ENCODE measurements at regions of chr16 and their contacts with region 1.

Region 1: DNA sequence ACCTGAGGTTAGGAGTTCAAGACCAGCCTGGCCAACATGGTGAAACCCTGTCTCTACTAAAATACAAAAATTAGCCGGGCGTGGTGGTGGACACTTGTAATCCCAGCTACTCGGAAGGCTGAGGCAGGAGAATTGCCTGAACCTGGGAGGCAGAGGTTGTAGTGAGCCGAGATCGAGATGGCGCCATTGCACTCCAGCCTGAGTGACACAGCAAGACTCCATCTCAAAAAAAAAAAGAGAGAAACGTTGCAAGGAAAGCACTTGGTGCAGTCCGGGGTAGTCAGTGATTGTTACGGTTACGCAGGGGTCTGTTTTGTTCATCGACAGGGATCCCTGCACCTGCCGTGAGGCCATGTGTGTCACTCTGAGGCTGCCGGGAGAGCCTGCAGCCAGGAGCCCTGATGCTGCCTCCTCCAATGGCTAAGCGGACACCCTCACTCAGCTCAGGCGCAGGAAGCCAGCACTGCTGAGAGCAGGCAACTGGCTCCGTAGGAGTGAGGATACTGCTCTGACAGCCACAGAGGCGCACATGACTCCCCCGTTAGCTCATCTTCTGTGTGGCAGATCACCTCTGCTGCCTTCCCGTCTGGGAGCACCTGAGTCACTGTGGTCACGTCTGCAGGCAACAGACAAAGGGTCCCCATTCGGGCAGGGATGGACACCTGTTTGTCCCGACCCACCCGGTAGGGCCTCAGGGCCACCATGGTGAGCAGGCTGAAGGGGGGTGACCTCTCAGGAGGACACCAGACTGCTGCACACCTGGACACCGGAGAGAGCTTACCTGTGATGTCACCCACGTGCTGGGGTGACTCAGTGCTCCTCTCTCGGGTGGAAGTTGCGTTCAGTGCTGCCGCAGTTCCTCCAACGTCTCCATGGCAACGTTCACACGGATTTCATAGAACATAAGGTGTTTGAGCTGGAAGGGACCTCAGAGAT is 5.2 kb upstream of the RAB26 start:
- DNase-seq: no peak
- H3K4me3 ChIP-seq: no peak overlapping the region
- H3K27ac ChIP-seq: no peak overlapping the region
- H3K4me1 ChIP-seq: peaks cover 5% of the 10 kb centered on the region
- H3K27me3 ChIP-seq: no peaks in the 10 kb centered on the region
- CTCF ChIP-seq: no peak

Region 2: GRCh38 chr16:1899641-1900451 is 243.4 kb before region 1 on chr16:
- CTCF ChIA-PET with region 1: no interaction called
- POLR2A ChIA-PET with region 1: interaction called, 11 read pairs
- intact Hi-C with region 1: no loop called
- DNase-seq: no peak
- H3K4me3 ChIP-seq: no peak overlapping the region
- H3K27ac ChIP-seq: no peak overlapping the region
- H3K4me1 ChIP-seq: no peaks in the 10 kb centered on the region
- H3K27me3 ChIP-seq: no peaks in the 10 kb centered on the region
- CTCF ChIP-seq: no peak

Region 3: DNA sequence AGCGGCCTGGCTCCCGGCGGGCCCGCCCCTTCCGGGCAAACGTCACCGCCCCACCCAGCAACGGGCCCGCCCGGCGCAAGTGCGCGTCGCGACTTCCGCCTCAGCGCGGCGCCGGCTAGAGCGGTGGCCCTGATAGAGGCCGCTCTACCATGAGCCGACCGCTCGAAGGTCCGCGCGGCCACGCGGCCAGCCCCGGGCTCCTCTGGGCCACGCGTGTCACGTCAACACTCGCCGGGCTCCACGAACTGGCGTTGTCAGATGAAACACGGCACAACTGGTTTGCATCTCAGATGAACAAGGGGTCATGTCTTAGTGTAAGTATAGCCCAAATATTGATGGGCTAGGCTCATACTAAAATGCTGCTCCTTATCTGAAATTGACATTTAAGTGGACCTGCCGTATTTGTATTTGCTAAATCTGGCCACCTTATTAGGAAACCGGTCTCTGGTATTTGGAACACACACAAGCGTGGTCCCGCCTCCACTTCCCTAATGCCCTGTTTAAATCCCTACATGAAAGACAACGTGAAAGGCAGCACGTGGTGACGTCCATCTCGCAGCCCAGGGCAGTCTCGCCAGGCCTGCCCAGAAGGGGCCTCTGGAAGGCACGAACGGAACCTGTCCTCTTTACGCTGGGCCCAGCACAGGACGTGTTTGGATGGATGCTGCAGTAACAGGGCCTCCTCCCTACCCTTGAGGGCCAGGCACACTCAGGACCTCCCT is 133.3 kb before region 1 on chr16 and contains the start of gene ZNF598:
- CTCF ChIA-PET with region 1: interaction called, 7 read pairs
- POLR2A ChIA-PET with region 1: no interaction called
- intact Hi-C with region 1: loop called (anchors 1 kb)
- DNase-seq: peak; percentile 93
- H3K4me3 ChIP-seq: peak within 1 kb of the TSS; percentile 99
- H3K27ac ChIP-seq: peak within 1 kb of the TSS; percentile 93
- H3K4me1 ChIP-seq: peaks cover 38% of the 10 kb centered on the region
- H3K27me3 ChIP-seq: no peaks in the 10 kb centered on the region
- CTCF ChIP-seq: no peak
- total RNA-seq, gene ZNF598: 68.0 and 75.8 TPM in 2 replicates

Region 4: DNA sequence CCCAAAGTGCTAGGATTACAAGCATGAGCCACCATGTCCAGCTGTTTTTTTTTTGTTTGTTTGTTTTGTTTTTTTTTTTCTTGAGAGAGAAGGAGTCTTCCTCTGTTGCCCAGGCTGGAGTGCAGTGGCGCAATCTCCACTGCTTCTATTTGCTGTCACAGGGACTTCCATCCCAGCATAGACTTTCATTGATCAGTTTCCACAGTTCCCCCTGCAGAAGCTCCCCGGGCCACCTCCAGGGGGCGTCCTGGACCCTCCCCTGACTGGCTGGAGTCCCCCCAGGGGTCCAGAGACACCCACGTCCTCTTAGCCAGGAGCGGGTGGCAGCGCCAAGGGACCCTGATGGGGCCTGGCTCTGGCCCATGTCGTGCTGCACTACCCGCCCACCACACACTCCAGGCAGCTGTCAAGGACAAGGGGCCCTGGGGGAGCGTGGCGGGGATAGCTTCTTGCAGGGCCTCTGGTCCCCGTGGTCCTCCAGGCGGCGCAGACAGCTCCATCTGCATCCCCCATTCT is 126.7 kb before region 1 on chr16:
- CTCF ChIA-PET with region 1: interaction called, 11 read pairs
- POLR2A ChIA-PET with region 1: no interaction called
- intact Hi-C with region 1: no loop called
- DNase-seq: peak; percentile 55
- H3K4me3 ChIP-seq: no peak overlapping the region
- H3K27ac ChIP-seq: no peak overlapping the region
- H3K4me1 ChIP-seq: no peaks in the 10 kb centered on the region
- H3K27me3 ChIP-seq: no peaks in the 10 kb centered on the region
- CTCF ChIP-seq: peak; percentile 70

Region 5: DNA sequence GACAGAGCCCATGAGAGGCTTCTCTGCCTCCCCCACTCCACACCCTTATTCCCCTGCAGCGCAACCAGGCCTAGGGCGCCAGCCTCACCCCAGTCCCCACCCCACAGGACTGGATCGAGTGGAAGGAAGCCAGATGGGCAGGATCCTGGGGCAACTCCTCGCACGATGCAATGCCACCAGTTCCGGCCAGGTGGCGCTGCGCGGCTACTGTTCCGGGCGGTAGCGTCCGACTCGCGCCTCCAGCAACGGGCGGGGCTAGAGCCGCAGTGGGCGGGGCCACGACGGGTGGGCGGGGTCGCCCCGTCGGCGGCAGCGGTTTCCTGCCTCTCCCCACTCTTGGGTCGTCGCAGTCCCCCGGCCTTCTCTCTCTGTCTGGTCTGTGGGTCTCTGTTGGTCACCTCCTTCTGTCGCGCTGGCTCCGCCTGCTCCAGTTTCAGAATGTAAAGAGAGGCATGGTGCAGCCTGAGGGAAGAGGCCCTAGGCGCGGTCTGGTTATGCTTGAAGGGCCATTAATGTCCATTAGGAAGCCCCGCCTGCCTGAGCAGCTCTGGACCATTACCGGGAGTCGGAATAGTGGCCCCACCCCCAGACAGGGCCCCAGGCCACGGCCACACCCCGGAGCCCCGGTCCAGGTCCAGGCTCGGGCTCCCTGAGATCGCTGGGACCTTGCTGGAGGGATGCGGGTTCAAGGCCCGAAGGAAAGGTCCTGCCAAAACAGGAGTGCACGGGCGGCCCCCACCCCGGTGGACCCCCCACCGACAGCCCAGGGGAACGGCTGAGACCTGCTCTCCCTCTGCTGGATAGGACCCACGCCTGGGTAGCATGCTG is 119.9 kb before region 1 on chr16:
- CTCF ChIA-PET with region 1: interaction called, 7 read pairs
- POLR2A ChIA-PET with region 1: no interaction called
- intact Hi-C with region 1: loop called (anchors 1 kb)
- DNase-seq: peak; percentile 91
- H3K4me3 ChIP-seq: peak overlapping the region; percentile 8
- H3K27ac ChIP-seq: peak overlapping the region; percentile 26
- H3K4me1 ChIP-seq: peaks cover 21% of the 10 kb centered on the region
- H3K27me3 ChIP-seq: no peaks in the 10 kb centered on the region
- CTCF ChIP-seq: peak; percentile 98